Heart right ventricle (tissue), 16 donors: ENCODE measurements at regions of chr16 and their contacts with region 1.

Region 1: GRCh38 chr16:10918294-10919002 is 23.8 kb downstream of the DEXI start:
- DNase-seq: peak; percentile 86 to 95
- ATAC-seq: peak; percentile 69 to 89 (median 78)
- H3K4me3 ChIP-seq: peak overlapping the region in 5 of 10 donors; percentile 21 to 34 (median 26)
- H3K27ac ChIP-seq: peak overlapping the region in 8 of 10 donors; percentile 17 to 70 (median 62)
- H3K4me1 ChIP-seq: peaks cover 17 to 54% (median 46%) of the 10 kb centered on the region in 9 donors
- H3K27me3 ChIP-seq: no peaks in the 10 kb centered on the region
- CTCF ChIP-seq: peak; percentile 86 to 98 (median 96)

Region 2: GRCh38 chr16:10256784-10257641 is 661.4 kb before region 1 on chr16:
- intact Hi-C with region 1: loop called in 1 of 10 experiments (anchors 10 kb)
- DNase-seq: peak; percentile 17 to 34
- ATAC-seq: peak; percentile 27 to 75 (median 60)
- H3K4me3 ChIP-seq: no peak overlapping the region
- H3K27ac ChIP-seq: no peak overlapping the region
- H3K4me1 ChIP-seq: peaks cover 0 to 13% (median 0%) of the 10 kb centered on the region in 9 donors
- H3K27me3 ChIP-seq: peaks cover 0 to 21% (median 9%) of the 10 kb centered on the region in 7 donors
- CTCF ChIP-seq: peak; percentile 46 to 85 (median 73)

Region 3: GRCh38 chr16:10509534-10510025 is 408.9 kb before region 1 on chr16:
- intact Hi-C with region 1: loop called in 2 of 10 experiments (anchors 2 to 5 kb)
- DNase-seq: peak in 1 of 2 donors; percentile 77
- ATAC-seq: peak; percentile 82 to 93 (median 88)
- H3K4me3 ChIP-seq: no peak overlapping the region
- H3K27ac ChIP-seq: no peak overlapping the region
- H3K4me1 ChIP-seq: peaks cover 0 to 9% (median 8%) of the 10 kb centered on the region in 9 donors
- H3K27me3 ChIP-seq: no peaks in the 10 kb centered on the region
- CTCF ChIP-seq: peak; percentile 74 to 89 (median 80)

Region 4: DNA sequence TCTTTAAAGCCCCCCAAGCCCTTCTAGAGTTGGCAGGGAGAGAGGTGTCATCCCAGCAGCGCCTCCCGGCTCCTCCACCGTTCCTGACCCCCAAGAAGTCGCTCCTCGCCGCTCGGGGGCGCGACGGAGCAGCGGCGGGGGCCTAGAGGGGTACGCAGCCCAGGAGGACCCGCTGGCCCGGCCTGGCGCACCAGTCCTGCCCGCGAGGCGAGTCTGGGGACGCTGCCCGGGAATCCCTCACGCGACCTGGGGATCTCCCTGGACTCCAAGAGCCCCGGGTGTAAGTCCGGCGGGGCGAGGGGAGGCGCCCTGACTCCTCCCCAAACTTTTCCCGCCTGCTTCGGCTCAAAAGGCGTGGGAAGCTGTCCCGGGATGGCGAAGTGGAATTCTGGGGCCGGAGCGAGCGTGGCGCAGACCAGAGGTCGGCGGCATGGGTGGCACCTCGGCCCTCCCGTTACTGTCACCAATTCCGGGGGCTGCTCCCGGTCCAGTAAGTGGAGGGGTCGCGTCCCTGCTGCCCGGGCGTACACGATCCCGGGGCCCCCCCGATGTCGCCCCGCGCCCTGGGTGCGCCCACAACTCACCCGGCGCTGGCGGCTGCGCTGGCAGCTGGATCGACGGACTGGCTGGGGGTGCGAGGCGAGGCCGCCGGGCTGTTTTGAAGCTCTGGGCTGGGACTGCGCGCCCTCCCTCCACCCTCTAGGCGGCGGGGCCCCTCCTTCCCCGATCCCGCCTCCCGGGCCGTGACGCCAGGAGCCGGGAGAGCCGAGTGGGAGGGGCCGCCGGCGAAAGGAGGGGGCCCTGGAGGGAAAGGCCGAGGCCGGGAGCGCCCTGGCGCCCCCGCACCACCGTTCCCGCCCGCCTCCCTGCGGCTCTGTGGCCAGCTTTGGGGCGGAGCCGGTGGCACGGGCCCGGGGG is 338.2 kb before region 1 on chr16 and contains the start of gene EMP2:
- intact Hi-C with region 1: loop called in 1 of 10 experiments (anchors 5 kb)
- DNase-seq: peak; percentile 86 to 89
- ATAC-seq: peak; percentile 87 to 92 (median 88)
- H3K4me3 ChIP-seq: peak within 1 kb of the TSS; percentile 80 to 98 (median 88)
- H3K27ac ChIP-seq: peak within 1 kb of the TSS; percentile 92 to 99 (median 97)
- H3K4me1 ChIP-seq: peaks cover 25 to 54% (median 44%) of the 10 kb centered on the region in 9 donors
- H3K27me3 ChIP-seq: peaks cover 0 to 32% (median 0%) of the 10 kb centered on the region in 7 donors
- CTCF ChIP-seq: peak; percentile 28 to 81 (median 64)
- total RNA-seq, gene EMP2: 44.6 to 108 (median 62.0) TPM

Region 5: DNA sequence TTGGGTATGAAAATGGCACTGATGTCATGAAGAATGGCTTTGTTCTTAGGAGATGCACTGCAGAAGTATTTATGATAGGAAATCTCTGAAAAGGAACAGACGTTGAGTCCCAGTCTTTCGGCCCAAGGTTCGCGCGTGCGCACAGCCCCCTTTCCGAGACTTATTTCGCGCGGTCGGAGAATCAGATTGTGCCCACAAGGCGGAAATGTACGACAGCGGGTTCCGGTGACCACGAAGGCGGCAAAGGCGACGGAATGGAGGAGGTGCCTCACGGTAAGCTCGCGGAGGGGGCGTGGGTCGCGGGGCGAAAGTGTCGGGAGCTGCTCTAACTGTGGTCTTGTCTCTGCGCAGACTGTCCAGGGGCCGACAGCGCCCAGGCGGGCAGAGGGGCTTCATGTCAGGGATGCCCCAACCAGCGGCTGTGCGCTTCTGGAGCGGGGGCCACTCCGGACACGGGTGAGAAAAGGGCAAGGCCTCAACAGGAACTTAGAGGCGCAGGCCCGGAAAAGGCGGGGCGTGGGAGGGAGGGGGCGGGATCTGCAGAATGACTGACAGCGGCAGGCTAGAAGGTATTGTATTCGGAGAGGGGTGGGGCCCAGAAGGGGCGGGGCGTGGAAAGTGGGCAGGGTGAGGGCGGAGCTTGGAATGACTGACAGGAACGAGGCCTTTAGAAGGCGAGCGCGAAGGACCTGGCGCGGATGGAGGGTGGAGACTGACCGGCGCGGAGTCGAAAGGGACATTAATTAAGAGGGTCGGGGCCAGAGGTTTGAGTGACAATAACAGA is 174.6 kb before region 1 on chr16 and contains the start of gene NUBP1:
- intact Hi-C with region 1: loop called in 7 of 10 experiments (anchors 2 to 5 kb)
- DNase-seq: peak; percentile 100
- ATAC-seq: peak; percentile 95 to 98 (median 97)
- H3K4me3 ChIP-seq: peak within 1 kb of the TSS in 9 of 10 donors; percentile 43 to 69 (median 60)
- H3K27ac ChIP-seq: peak within 1 kb of the TSS; percentile 94 to 99 (median 97)
- H3K4me1 ChIP-seq: peaks cover 7 to 49% (median 37%) of the 10 kb centered on the region in 9 donors
- H3K27me3 ChIP-seq: no peaks in the 10 kb centered on the region
- CTCF ChIP-seq: no peak
- total RNA-seq, gene NUBP1: 44.1 to 57.1 (median 50.3) TPM

Region 6: DNA sequence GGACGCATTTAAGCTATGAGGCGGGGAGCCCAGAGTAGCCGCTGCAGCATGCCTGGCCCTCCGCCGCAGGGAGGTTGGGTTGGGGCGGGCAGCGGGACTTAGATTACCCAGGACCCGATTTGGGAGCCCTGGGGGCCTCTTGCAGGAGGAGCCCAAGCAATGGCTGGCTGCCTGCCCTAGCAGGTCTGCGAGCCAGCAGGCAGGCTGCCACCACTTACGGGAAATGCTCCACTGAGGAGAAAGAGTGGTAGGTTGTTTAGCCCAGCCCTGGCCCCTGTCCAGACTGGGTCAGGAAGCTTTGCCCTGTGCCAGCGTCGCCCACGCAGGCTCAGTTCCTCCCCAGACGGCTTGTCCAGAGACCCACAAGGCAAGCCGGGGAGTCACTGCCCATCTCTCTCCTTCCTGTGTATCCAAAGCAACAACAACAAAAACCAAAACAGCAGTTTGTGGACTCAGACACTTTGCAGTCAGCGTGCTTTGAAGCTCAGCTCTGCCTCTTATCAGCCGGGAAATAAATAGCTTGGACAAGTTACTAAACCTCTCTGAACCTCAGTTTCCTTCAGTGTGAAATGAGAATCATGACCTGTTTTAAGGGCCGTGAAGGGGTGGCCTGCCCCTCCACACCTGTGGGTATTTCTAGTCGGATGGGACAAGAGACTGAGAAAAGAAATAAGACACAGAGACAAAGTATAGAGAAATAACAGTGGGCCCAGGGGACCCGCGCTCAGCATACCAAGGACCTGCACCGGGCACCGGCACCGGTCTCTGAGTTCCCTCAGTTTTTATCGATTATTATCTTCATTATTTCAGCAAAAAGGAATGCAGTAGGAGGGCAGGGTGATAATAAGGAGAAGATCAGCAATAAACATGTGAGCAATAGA is 89.4 kb before region 1 on chr16:
- intact Hi-C with region 1: loop called in 5 of 10 experiments (anchors 2 to 5 kb)
- DNase-seq: peak; percentile 93 to 96
- ATAC-seq: peak; percentile 76 to 94 (median 85)
- H3K4me3 ChIP-seq: peak overlapping the region in 4 of 10 donors; percentile 1 to 14 (median 4)
- H3K27ac ChIP-seq: peak overlapping the region; percentile 93 to 100 (median 95)
- H3K4me1 ChIP-seq: peaks cover 18 to 53% (median 39%) of the 10 kb centered on the region in 9 donors
- H3K27me3 ChIP-seq: no peaks in the 10 kb centered on the region
- CTCF ChIP-seq: no peak

Region 7: GRCh38 chr16:10876799-10877341 is 41.6 kb before region 1 on chr16 and contains the start of gene CIITA:
- intact Hi-C with region 1: loop called in 2 of 10 experiments (anchors 5 kb)
- DNase-seq: peak; percentile 65 to 73
- ATAC-seq: peak in 7 of 8 donors; percentile 33 to 59 (median 51)
- H3K4me3 ChIP-seq: peak within 1 kb of the TSS in 6 of 10 donors; percentile 71 to 80 (median 73)
- H3K27ac ChIP-seq: peak within 1 kb of the TSS in 6 of 10 donors; percentile 20 to 88 (median 76)
- H3K4me1 ChIP-seq: peaks cover 4 to 69% (median 22%) of the 10 kb centered on the region in 9 donors
- H3K27me3 ChIP-seq: peaks cover 0 to 39% (median 20%) of the 10 kb centered on the region in 7 donors
- CTCF ChIP-seq: no peak
- total RNA-seq, gene CIITA: 5.1 to 50.8 (median 8.7) TPM

Region 8: GRCh38 chr16:10964039-10964890 is 45.8 kb after region 1 on chr16:
- intact Hi-C with region 1: no loop called
- DNase-seq: peak; percentile 83 to 87
- ATAC-seq: peak; percentile 81 to 91 (median 86)
- H3K4me3 ChIP-seq: no peak overlapping the region
- H3K27ac ChIP-seq: peak overlapping the region in 3 of 10 donors; percentile 30 to 47 (median 46)
- H3K4me1 ChIP-seq: peaks cover 4 to 39% (median 14%) of the 10 kb centered on the region in 9 donors
- H3K27me3 ChIP-seq: no peaks in the 10 kb centered on the region
- CTCF ChIP-seq: peak; percentile 78 to 98 (median 96)

Region 9: DNA sequence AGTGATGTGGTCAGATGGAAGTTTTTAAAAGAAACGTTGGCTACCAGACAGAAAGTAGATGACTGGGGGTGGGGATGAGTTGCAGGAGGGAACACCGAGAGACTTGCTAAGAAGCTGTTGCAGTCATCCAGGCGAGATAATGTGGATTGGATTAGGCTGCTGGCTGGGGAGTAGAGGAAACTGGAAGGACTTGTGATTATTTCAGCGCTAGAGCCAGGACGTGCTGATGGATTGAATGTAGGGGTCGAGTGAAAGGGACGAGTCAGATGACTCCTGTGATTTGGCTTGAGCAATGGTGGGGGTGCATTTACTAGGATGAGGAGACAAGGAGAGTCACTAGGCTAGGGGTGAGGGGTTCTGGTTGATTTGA is 114.5 kb after region 1 on chr16:
- intact Hi-C with region 1: no loop called
- DNase-seq: peak in 1 of 2 donors; percentile 45
- ATAC-seq: peak; percentile 54 to 88 (median 82)
- H3K4me3 ChIP-seq: no peak overlapping the region
- H3K27ac ChIP-seq: peak overlapping the region; percentile 12 to 66 (median 56)
- H3K4me1 ChIP-seq: peaks cover 6 to 57% (median 42%) of the 10 kb centered on the region in 9 donors
- H3K27me3 ChIP-seq: no peaks in the 10 kb centered on the region
- CTCF ChIP-seq: no peak